Activated B cell treated with CpG ODN at 0.5 μM for 24 hours (primary cell): ENCODE measurements at regions of chr16 and their contacts with region 1.

Region 1: GRCh38 chr16:46789499-46790414 is 41.2 kb downstream of the C16orf87 start:
- DNase-seq: peak; percentile 77
- ATAC-seq: peak; percentile 93
- H3K4me3 Mint-ChIP-seq: peak overlapping the region; percentile 84
- H3K27ac Mint-ChIP-seq: peak overlapping the region; percentile 86
- H3K4me1 Mint-ChIP-seq: peaks cover 57% of the 10 kb centered on the region
- H3K27me3 Mint-ChIP-seq: no peaks in the 10 kb centered on the region
- CTCF ChIP-seq: no peak

Region 2: DNA sequence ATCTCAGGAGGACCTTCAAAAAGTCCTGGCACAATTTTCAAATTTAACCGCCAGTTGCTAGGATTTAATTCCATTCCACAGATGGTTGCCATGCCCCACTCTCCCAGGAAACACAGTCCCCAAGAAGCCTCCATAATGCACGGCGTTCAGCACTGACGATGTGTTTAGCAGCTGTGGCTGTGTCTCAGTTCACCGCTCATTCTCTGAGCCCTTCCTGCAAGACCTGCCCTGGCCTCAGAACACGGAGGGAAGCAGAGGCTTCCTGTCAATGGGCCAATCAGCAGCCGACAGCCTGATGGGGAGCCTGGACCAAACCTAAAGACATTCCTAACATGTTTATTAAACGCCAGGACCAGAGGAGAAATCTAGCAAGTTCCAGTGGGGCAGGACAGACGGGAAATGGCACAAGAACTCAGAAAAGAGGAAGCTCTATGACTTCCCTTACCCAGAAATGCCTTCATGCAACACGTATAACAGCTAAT is 46.5 kb before region 1 on chr16:
- CTCF ChIA-PET with region 1: no interaction called
- POLR2A ChIA-PET with region 1: interaction called, 13 read pairs
- intact Hi-C with region 1: loop called (anchors 2 kb)
- DNase-seq: peak; percentile 38
- ATAC-seq: peak; percentile 82
- H3K4me3 Mint-ChIP-seq: peak overlapping the region; percentile 86
- H3K27ac Mint-ChIP-seq: peak overlapping the region; percentile 97
- H3K4me1 Mint-ChIP-seq: peaks cover 24% of the 10 kb centered on the region
- H3K27me3 Mint-ChIP-seq: no peaks in the 10 kb centered on the region
- CTCF ChIP-seq: no peak

Region 3: GRCh38 chr16:46808997-46809396 is 19.2 kb after region 1 on chr16:
- CTCF ChIA-PET with region 1: interaction called, 4 read pairs
- POLR2A ChIA-PET with region 1: interaction called, 3 read pairs
- intact Hi-C with region 1: loop called (anchors 2 kb)
- DNase-seq: no peak
- ATAC-seq: peak; percentile 92
- H3K4me3 Mint-ChIP-seq: no peak overlapping the region
- H3K27ac Mint-ChIP-seq: no peak overlapping the region
- H3K4me1 Mint-ChIP-seq: peaks cover 16% of the 10 kb centered on the region
- H3K27me3 Mint-ChIP-seq: no peaks in the 10 kb centered on the region
- CTCF ChIP-seq: no peak

Region 4: GRCh38 chr16:46883690-46884512 is 94.1 kb after region 1 on chr16 and contains the start of gene GPT2:
- CTCF ChIA-PET with region 1: no interaction called
- POLR2A ChIA-PET with region 1: interaction called, 3 read pairs
- intact Hi-C with region 1: loop called (anchors 2 kb)
- DNase-seq: peak; percentile 85
- ATAC-seq: peak; percentile 95
- H3K4me3 Mint-ChIP-seq: peak within 1 kb of the TSS; percentile 89
- H3K27ac Mint-ChIP-seq: peak within 1 kb of the TSS; percentile 85
- H3K4me1 Mint-ChIP-seq: peaks cover 11% of the 10 kb centered on the region
- H3K27me3 Mint-ChIP-seq: peaks cover 2% of the 10 kb centered on the region
- CTCF ChIP-seq: no peak
- total RNA-seq, gene GPT2: 11.7 and 17.4 TPM in 2 replicates

Region 5: GRCh38 chr16:46973207-46973995 is 183.6 kb after region 1 on chr16 and contains the start of gene DNAJA2:
- CTCF ChIA-PET with region 1: no interaction called
- POLR2A ChIA-PET with region 1: interaction called, 6 read pairs
- intact Hi-C with region 1: loop called (anchors 1 kb)
- DNase-seq: peak; percentile 94
- ATAC-seq: peak; percentile 93
- H3K4me3 Mint-ChIP-seq: peak within 1 kb of the TSS; percentile 95
- H3K27ac Mint-ChIP-seq: peak within 1 kb of the TSS; percentile 98
- H3K4me1 Mint-ChIP-seq: peaks cover 44% of the 10 kb centered on the region
- H3K27me3 Mint-ChIP-seq: no peaks in the 10 kb centered on the region
- CTCF ChIP-seq: no peak
- total RNA-seq, gene DNAJA2: 54.4 and 57.1 TPM in 2 replicates

Region 6: GRCh38 chr16:47387026-47387734 is 597.4 kb after region 1 on chr16:
- CTCF ChIA-PET with region 1: no interaction called
- POLR2A ChIA-PET with region 1: no interaction called
- intact Hi-C with region 1: no loop called
- DNase-seq: no peak
- ATAC-seq: no peak
- H3K4me3 Mint-ChIP-seq: no peak overlapping the region
- H3K27ac Mint-ChIP-seq: no peak overlapping the region
- H3K4me1 Mint-ChIP-seq: peaks cover 4% of the 10 kb centered on the region
- H3K27me3 Mint-ChIP-seq: no peaks in the 10 kb centered on the region
- CTCF ChIP-seq: no peak